Natural killer cell (primary cell): ENCODE measurements at regions of chr5 and their contacts with region 1.

Region 1: GRCh38 chr5:81851481-81852178 is 100.7 kb upstream of the SSBP2 start:
- DNase-seq: peak; percentile 88 to 94
- ATAC-seq: peak; percentile 94 to 96 (median 94)
- H3K4me3 ChIP-seq: peak overlapping the region; percentile 75
- H3K4me3 Mint-ChIP-seq: peak overlapping the region; percentile 99
- H3K27ac ChIP-seq: peak overlapping the region; percentile 77
- H3K27ac Mint-ChIP-seq: peak overlapping the region; percentile 90 to 95
- H3K4me1 ChIP-seq: peaks cover 30% of the 10 kb centered on the region
- H3K4me1 Mint-ChIP-seq: peaks cover 32 to 33% of the 10 kb centered on the region in 2 donors
- H3K27me3 ChIP-seq: no peaks in the 10 kb centered on the region
- H3K27me3 Mint-ChIP-seq: peaks cover 4 to 16% of the 10 kb centered on the region in 2 donors
- CTCF ChIP-seq: no peak

Region 2: DNA sequence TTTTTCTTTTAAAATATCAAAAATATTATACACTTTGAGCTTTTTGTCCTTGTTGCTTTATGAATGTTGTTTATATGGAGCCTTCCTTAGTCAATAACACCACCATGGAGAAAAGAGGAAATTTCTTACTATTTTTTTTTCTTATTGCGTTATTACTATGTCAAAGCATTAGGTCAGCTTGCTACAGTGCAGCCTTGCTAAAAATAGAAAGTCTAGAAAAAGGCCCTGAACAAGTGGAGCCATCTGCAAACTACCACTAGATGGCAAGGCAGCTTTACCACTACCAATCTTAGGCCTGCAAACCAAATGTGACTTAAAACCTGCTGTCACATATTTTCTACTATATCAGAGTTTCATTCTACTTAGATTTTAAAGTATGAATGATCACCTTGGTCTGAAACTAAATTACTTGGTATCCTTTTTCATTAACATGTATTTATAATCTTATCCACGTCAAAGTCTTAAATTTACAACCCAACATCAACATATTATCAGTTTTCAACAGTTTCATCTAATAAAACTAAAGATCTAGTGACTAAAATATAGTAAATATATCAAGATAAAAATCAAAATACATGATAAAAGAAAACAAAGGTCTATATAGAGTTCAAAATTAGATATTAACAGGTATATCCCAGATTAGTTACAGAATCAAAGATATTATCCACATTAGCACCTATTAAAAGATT is 344.6 kb before region 1 on chr5:
- intact Hi-C with region 1: loop called (anchors 5 kb)
- DNase-seq: peak in 1 of 2 donors; percentile 74
- ATAC-seq: peak; percentile 93 to 99 (median 95)
- H3K4me3 ChIP-seq: no peak overlapping the region
- H3K4me3 Mint-ChIP-seq: peak overlapping the region; percentile 23
- H3K27ac ChIP-seq: no peak overlapping the region
- H3K27ac Mint-ChIP-seq: peak overlapping the region in 1 of 2 donors; percentile 44
- H3K4me1 ChIP-seq: no peaks in the 10 kb centered on the region
- H3K4me1 Mint-ChIP-seq: no peaks in the 10 kb centered on the region
- H3K27me3 ChIP-seq: no peaks in the 10 kb centered on the region
- H3K27me3 Mint-ChIP-seq: no peaks in the 10 kb centered on the region
- CTCF ChIP-seq: peak; percentile 67

Region 3: GRCh38 chr5:81751009-81751835 is 100.4 kb before region 1 on chr5 and contains the start of gene SSBP2:
- intact Hi-C with region 1: loop called (anchors 1 kb)
- DNase-seq: peak; percentile 98 to 99
- ATAC-seq: peak; percentile 89 to 96 (median 90)
- H3K4me3 ChIP-seq: peak within 1 kb of the TSS; percentile 39
- H3K4me3 Mint-ChIP-seq: peak within 1 kb of the TSS; percentile 95
- H3K27ac ChIP-seq: peak within 1 kb of the TSS; percentile 87
- H3K27ac Mint-ChIP-seq: peak within 1 kb of the TSS; percentile 69 to 93
- H3K4me1 ChIP-seq: peaks cover 6% of the 10 kb centered on the region
- H3K4me1 Mint-ChIP-seq: peaks cover 0 to 11% of the 10 kb centered on the region in 2 donors
- H3K27me3 ChIP-seq: no peaks in the 10 kb centered on the region
- H3K27me3 Mint-ChIP-seq: peaks cover 0 to 12% of the 10 kb centered on the region in 2 donors
- CTCF ChIP-seq: no peak
- total RNA-seq, gene SSBP2: 13.1 to 17.3 (median 14.8) TPM

Region 4: GRCh38 chr5:81936066-81936465 is 84.4 kb after region 1 on chr5:
- intact Hi-C with region 1: no loop called
- DNase-seq: no peak
- ATAC-seq: no peak
- H3K4me3 ChIP-seq: no peak overlapping the region
- H3K4me3 Mint-ChIP-seq: no peak overlapping the region
- H3K27ac ChIP-seq: no peak overlapping the region
- H3K27ac Mint-ChIP-seq: no peak overlapping the region
- H3K4me1 ChIP-seq: no peaks in the 10 kb centered on the region
- H3K4me1 Mint-ChIP-seq: no peaks in the 10 kb centered on the region
- H3K27me3 ChIP-seq: no peaks in the 10 kb centered on the region
- H3K27me3 Mint-ChIP-seq: peaks cover 0 to 6% of the 10 kb centered on the region in 2 donors
- CTCF ChIP-seq: no peak

Region 5: GRCh38 chr5:81971712-81972495 is 120.3 kb after region 1 on chr5 and contains the start of gene ATG10:
- intact Hi-C with region 1: loop called (anchors 5 kb)
- DNase-seq: peak; percentile 90 to 94
- ATAC-seq: peak; percentile 92 to 98 (median 93)
- H3K4me3 ChIP-seq: peak within 1 kb of the TSS; percentile 99
- H3K4me3 Mint-ChIP-seq: peak within 1 kb of the TSS; percentile 100
- H3K27ac ChIP-seq: peak within 1 kb of the TSS; percentile 99
- H3K27ac Mint-ChIP-seq: peak within 1 kb of the TSS; percentile 95 to 96
- H3K4me1 ChIP-seq: peaks cover 10% of the 10 kb centered on the region
- H3K4me1 Mint-ChIP-seq: peaks cover 15 to 19% of the 10 kb centered on the region in 2 donors
- H3K27me3 ChIP-seq: no peaks in the 10 kb centered on the region
- H3K27me3 Mint-ChIP-seq: no peaks in the 10 kb centered on the region
- CTCF ChIP-seq: no peak
- total RNA-seq, gene ATG10: 9.0 to 11.5 (median 11.4) TPM

Region 6: DNA sequence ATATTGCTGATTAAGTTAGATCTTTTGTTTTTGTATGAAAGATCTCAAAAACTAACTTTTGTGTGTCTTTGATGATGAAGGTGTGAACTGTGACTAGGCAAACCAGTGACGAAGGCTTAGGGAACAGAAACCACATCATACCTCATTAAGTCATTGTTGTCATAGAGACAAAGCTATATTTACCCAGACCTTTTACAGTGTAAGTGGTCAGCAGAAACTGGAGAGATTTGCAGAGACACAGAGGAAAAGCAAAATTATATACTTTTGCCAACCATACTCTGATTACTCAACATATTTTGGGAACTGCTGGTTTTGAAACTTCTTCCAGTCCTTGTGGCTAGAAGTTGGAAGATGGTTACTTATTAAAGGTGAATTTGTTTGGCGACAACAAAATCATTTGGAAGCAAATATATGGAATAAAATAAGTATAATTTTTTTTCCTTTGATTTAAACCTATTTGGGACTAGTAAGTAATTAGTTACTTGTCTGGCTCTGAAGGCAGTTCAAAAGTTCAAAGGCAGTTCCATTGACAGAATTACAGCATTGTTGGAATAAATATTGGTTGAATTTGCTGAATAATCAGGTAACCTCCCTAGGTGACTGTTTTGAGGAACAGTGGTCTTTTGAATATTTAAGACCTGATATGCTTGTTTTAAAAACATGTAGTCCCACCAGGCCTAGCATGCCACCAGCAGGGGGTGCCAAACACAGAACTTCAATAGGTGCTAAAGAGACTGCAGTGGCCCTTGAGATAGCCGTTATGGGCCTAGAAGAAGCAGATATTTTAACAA is 322.7 kb after region 1 on chr5:
- intact Hi-C with region 1: loop called (anchors 10 kb)
- DNase-seq: peak; percentile 44 to 67
- ATAC-seq: peak; percentile 58 to 87 (median 86)
- H3K4me3 ChIP-seq: no peak overlapping the region
- H3K4me3 Mint-ChIP-seq: no peak overlapping the region
- H3K27ac ChIP-seq: no peak overlapping the region
- H3K27ac Mint-ChIP-seq: peak overlapping the region in 1 of 2 donors; percentile 75
- H3K4me1 ChIP-seq: peaks cover 2% of the 10 kb centered on the region
- H3K4me1 Mint-ChIP-seq: peaks cover 5 to 11% of the 10 kb centered on the region in 2 donors
- H3K27me3 ChIP-seq: no peaks in the 10 kb centered on the region
- H3K27me3 Mint-ChIP-seq: no peaks in the 10 kb centered on the region
- CTCF ChIP-seq: peak; percentile 72